Activated naive CD4-positive, alpha-beta T cell treated with anti-CD3 and anti-CD28 coated beads for 36 hours (primary cell): ENCODE measurements at regions of chr4 and their contacts with region 1.

Region 1: GRCh38 chr4:88284439-88285234 is at the start of gene PPM1K:
- DNase-seq: peak; percentile 99
- H3K4me3 Mint-ChIP-seq: peak within 1 kb of the TSS; percentile 89
- H3K27ac Mint-ChIP-seq: peak within 1 kb of the TSS; percentile 98
- H3K4me1 Mint-ChIP-seq: peaks cover 34% of the 10 kb centered on the region
- H3K27me3 Mint-ChIP-seq: no peaks in the 10 kb centered on the region
- total RNA-seq, gene PPM1K: 54.1 to 55.2 TPM

Region 2: DNA sequence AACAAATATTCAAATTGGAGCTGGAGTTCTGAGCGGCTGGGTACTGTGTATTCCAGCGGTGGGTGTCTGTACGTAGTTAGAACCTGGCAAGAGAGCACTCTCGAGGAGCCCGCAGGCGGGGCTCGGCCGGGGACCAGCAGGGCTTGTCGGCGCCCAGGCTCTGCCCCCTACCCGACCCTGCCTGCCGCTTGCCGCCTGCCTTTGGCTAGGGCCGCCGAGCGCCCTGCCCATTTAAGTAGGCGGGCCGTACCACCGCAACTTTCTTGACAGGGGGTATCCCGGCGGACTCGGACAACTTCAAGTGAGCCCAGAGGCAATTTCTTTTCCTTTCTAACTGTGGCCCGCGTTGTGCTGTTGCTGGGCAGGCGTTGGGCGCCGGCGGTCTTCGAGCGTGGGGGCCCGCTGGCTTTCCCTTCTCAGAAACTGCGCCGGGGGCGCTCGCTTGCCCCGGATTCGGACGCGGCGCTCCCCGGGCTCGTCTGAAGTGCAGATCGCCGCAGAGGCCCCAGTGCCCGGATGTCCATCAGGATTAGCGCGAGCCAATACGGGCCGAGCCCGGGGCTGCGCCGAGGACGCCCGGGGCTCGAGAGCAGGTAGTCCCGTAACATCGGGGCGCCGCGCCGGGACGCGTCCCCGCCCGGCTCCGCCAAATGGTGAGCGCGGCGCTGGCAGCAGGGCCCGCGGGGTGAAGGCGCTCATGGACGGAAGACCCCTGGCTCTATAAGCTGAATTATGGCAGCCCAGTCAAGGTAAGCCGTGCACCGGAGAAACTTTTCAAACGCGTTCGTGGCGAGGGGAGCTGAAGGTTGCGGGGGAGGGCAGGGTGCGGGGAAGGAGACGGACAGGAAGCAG is 1277.7 kb before region 1 on chr4:
- CTCF ChIA-PET with region 1: no interaction called
- intact Hi-C with region 1: loop called (anchors 5 kb)
- DNase-seq: peak; percentile 81
- H3K4me3 Mint-ChIP-seq: peak overlapping the region; percentile 89
- H3K27ac Mint-ChIP-seq: peak overlapping the region; percentile 96
- H3K4me1 Mint-ChIP-seq: peaks cover 50% of the 10 kb centered on the region
- H3K27me3 Mint-ChIP-seq: no peaks in the 10 kb centered on the region

Region 3: GRCh38 chr4:88007304-88008121 is 277.1 kb before region 1 on chr4 and contains the start of gene PKD2:
- CTCF ChIA-PET with region 1: no interaction called
- intact Hi-C with region 1: loop called (anchors 2 kb)
- DNase-seq: peak; percentile 81
- H3K4me3 Mint-ChIP-seq: peak within 1 kb of the TSS; percentile 87
- H3K27ac Mint-ChIP-seq: peak within 1 kb of the TSS; percentile 52
- H3K4me1 Mint-ChIP-seq: peaks cover 14% of the 10 kb centered on the region
- H3K27me3 Mint-ChIP-seq: peaks cover 10% of the 10 kb centered on the region
- total RNA-seq, gene PKD2: 1.7 to 1.9 TPM

Region 4: DNA sequence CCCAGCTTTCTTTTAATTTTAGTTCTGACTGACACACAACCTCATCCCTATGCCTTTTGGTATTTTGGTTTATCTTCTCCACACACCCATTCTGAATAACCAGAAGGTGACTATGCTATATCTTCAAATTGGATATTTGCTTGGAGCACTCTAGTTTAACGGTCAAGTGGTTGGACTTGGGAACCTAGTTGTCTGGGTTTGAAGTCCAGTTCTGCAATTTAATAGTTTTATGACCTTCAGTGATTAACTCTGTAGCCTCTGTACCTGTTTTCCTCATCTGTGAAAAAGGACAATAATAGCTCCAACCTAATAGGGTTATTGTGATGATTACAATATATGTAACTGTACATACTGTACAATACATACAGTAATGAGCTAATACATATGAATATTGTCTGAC is 20.3 kb before region 1 on chr4:
- CTCF ChIA-PET with region 1: no interaction called
- intact Hi-C with region 1: loop called (anchors 2 kb)
- DNase-seq: no peak
- H3K4me3 Mint-ChIP-seq: no peak overlapping the region
- H3K27ac Mint-ChIP-seq: no peak overlapping the region
- H3K4me1 Mint-ChIP-seq: no peaks in the 10 kb centered on the region
- H3K27me3 Mint-ChIP-seq: no peaks in the 10 kb centered on the region

Region 5: DNA sequence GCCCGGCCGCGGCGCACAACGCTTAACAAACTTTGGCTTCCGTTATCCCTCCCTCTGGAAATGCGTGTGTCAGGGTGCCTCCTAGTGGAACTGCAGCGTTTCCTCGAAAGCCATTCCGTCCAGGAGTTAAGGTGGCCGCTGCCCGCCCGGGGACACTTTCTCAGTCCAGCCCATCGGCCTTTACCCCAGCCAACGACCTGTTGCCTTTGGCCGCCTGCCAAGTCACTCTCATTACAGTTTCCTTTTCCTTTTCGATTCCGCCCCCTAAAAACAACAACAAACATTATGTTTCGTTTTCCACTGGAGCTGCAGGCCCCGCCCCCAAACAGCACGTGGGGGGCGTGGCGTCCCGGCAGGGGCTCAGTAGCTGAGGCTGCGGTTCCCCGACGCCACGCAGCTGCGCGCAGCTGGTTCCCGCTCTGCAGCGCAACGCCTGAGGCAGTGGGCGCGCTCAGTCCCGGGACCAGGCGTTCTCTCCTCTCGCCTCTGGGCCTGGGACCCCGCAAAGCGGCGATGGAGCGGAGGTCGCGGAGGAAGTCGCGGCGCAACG is 172.2 kb after region 1 on chr4 and contains the start of gene HERC5:
- CTCF ChIA-PET with region 1: no interaction called
- intact Hi-C with region 1: loop called (anchors 1 kb)
- DNase-seq: peak; percentile 93
- H3K4me3 Mint-ChIP-seq: peak within 1 kb of the TSS; percentile 98
- H3K27ac Mint-ChIP-seq: peak within 1 kb of the TSS; percentile 97
- H3K4me1 Mint-ChIP-seq: peaks cover 5% of the 10 kb centered on the region
- H3K27me3 Mint-ChIP-seq: no peaks in the 10 kb centered on the region
- total RNA-seq, gene HERC5: 38.8 to 39.5 TPM

Region 6: DNA sequence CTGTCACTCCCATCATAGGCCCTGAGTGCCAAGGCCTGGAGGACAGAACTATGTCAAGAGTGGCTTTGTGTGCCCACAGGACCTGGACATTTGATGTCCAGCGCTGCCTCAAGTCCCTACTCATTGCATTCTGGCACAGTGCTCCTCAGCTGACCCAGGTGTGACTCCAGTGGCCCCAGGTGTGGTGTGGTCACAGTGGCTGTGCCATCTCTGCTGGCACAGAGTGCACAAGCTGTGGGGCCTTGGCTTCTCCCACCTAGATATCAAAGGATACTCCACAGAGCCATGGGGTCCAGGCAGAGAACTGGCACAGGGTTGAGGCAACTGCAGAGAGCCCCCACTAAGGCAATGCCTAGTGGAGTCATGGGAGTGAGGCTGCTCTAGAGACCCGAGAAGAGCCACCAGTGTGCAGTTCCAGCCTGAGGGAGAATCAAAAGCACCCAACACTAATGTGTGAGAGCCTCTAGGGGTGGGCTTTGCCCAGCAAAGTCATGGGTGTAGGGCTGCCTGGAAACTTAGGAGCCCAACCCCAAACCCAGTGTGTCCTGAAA is 213.3 kb after region 1 on chr4:
- CTCF ChIA-PET with region 1: no interaction called
- intact Hi-C with region 1: no loop called
- DNase-seq: no peak
- H3K4me3 Mint-ChIP-seq: no peak overlapping the region
- H3K27ac Mint-ChIP-seq: no peak overlapping the region
- H3K4me1 Mint-ChIP-seq: no peaks in the 10 kb centered on the region
- H3K27me3 Mint-ChIP-seq: no peaks in the 10 kb centered on the region

Region 7: GRCh38 chr4:88591787-88592599 is 307.4 kb after region 1 on chr4 and contains the start of gene HERC3:
- CTCF ChIA-PET with region 1: no interaction called
- intact Hi-C with region 1: loop called (anchors 1 kb)
- DNase-seq: peak; percentile 90
- H3K4me3 Mint-ChIP-seq: peak within 1 kb of the TSS; percentile 98
- H3K27ac Mint-ChIP-seq: peak within 1 kb of the TSS; percentile 83
- H3K4me1 Mint-ChIP-seq: peaks cover 41% of the 10 kb centered on the region
- H3K27me3 Mint-ChIP-seq: no peaks in the 10 kb centered on the region
- total RNA-seq, gene HERC3: 24.4 to 25.8 TPM